Gastrocnemius medialis (tissue), 4 donors: ENCODE measurements at regions of chr9 and their contacts with region 1.

Region 1: DNA sequence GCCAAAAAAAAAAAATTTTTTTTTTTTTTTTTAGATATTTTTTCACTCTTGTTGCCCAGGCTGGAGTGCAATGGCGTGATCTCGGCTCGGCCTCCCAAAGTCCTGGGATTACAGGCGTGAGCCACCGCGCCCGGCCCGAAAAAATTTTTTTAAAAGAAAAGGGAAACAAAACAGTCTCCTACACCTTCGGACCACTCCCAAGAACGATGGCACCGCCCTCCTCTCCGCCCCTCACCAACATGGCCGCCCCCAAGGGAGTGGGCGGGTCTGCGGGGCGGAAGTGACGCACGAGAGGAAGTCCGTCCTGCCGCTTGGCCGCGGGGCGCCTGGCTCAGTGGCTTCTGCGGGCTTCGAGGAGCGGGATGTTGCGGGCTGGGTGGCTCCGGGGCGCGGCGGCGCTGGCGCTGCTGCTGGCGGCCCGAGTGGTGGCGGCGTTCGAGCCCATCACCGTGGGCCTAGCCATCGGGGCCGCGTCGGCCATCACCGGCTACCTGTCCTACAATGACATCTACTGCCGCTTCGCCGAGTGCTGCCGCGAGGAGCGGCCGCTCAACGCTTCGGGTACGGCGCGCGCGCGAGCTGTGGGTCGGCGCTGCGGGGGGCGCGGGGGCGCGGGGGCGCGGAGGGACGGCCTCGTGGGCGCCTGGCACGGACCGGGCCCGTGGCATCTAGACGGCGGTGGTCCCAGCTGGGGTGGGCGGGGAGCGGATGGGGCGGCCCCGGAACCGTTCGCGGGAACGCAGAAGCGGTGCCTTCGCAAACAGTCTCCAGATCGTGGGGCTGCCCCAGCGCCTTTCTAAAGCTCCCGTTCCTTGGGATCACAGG is at the start of gene TOR1B:
- DNase-seq: peak; percentile 84 to 89
- ATAC-seq: peak; percentile 91 to 96
- H3K4me3 ChIP-seq: peak within 1 kb of the TSS; percentile 78 to 99 (median 89)
- H3K27ac ChIP-seq: peak within 1 kb of the TSS; percentile 82 to 90 (median 86)
- H3K4me1 ChIP-seq: peaks cover 8 to 10% of the 10 kb centered on the region in 2 donors
- H3K27me3 ChIP-seq: no peaks in the 10 kb centered on the region
- CTCF ChIP-seq: peak in 1 of 5 experiments; percentile 12
- POLR2A ChIP-seq: peak; percentile 63 to 79
- total RNA-seq, gene TOR1B: 15.9 to 22.6 (median 21.2) TPM

Region 2: DNA sequence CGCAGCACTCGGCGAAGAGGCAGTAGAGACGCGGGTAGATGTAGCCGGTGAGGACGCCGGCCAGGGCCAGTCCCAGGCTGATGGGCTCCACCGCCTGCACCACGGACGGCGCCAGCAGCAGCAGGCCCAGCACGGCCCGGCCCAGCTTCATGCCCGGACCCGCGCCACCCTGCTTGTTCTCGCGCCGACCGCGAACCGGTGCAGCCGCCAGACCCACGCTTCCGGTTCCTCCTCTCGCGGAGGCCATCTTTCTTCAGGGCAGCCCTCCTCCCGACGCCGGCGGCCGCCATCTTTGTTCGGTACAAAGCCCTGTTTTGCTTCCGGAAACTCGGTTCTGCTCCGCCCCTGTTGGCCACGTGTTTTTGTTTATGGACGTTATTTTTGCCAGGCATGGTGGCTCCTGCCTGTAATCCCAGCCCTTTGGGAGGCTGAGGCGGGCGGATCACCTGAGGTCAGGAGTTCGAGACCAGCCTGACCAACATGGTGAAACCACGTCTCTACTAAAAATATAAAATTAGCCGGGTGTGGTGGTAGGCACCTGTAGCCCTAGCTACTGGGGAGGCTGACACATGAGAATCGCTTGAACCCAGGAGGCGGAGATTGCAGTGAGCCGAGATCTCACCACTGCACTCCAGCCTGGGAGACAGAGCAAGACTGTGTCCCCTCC is 21.0 kb after region 1 on chr9 and contains the start of gene TOR1A:
- in situ Hi-C with region 1: no loop called
- intact Hi-C with region 1: loop called (anchors 1 kb)
- DNase-seq: peak; percentile 95 to 96
- ATAC-seq: peak; percentile 99
- H3K4me3 ChIP-seq: peak within 1 kb of the TSS; percentile 75 to 88 (median 78)
- H3K27ac ChIP-seq: peak within 1 kb of the TSS; percentile 68 to 86 (median 78)
- H3K4me1 ChIP-seq: peaks cover 0 to 8% of the 10 kb centered on the region in 2 donors
- H3K27me3 ChIP-seq: no peaks in the 10 kb centered on the region
- CTCF ChIP-seq: no peak
- POLR2A ChIP-seq: peak in 1 of 2 donors; percentile 25
- total RNA-seq, gene TOR1A: 18.1 to 31.9 (median 24.9) TPM